ENCODE measurements at regions of chr1 and their contacts with region 1.

Region 1: GRCh38 chr1:241611063-241611462 is 29.1 kb downstream of the CHML start:
- DNase-seq: peak; percentile 57 to 90
- ATAC-seq: peak; percentile 41 to 63
- H3K4me3 ChIP-seq: no peak overlapping the region
- H3K27ac ChIP-seq: peak overlapping the region; percentile 89 to 90
- H3K4me1 ChIP-seq: peaks cover 95% of the 10 kb centered on the region
- CTCF ChIP-seq: peak; percentile 86
- EP300 ChIP-seq: no peak
- POLR2A ChIP-seq: no peak
- RAD21 ChIP-seq: peak; percentile 89

Region 2: DNA sequence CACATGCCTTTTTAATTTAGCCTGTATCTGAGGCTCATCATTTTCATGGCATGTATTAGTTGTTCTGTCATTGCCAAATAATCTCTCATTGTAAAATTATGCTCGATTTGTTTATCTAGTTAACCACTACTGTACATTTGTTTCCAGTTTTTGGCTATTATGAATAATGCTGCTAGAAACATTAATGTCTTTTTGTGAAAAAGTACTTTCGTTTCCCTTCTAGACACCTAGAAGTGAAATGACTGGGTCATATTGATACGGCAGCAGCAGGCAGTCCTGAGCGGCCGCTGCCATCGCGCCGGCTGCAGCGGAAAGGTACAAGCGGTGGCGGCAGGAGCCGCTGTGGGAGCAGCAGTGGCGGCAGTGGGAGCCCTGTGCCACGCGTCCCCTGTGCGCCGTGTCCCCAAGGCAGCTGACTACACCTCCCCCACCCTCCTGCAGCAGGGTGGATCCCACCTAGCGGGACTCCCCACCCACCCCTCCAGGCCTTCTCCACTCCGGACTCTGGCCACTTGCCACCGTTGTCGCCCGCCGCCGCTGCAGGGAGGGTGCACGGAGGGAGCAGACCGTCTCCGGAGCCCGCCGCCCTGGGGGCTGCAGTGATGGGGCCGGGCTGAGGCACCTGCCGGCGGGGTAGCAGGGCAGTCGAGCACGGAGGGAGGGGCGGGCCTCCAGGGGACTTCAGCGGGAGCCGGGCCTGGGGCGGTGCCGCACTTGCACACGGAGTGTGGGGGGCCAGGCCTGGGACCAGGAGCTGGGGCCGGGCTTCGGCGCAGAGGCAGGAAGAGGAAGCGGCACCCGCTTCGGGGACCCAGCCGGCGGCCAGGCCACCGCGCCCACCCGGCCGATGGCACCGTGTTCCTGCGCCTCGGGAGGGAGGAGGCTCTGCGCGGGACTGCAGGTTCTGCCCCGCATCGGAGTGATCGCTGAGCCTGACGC is 187.3 kb before region 1 on chr1:
- CTCF ChIA-PET with region 1: no interaction called
- POLR2A ChIA-PET with region 1: no interaction called
- DNase-seq: peak in 1 of 2 experiments; percentile 8
- ATAC-seq: peak; percentile 91 to 92
- H3K4me3 ChIP-seq: peak overlapping the region; percentile 47
- H3K27ac ChIP-seq: peak overlapping the region in 1 of 2 experiments; percentile 73; a peak in 3 of 6 replicates
- H3K4me1 ChIP-seq: no peaks in the 10 kb centered on the region
- CTCF ChIP-seq: no peak
- EP300 ChIP-seq: no peak
- POLR2A ChIP-seq: no peak
- RAD21 ChIP-seq: no peak

Region 3: GRCh38 chr1:241531195-241532161 is 79.6 kb before region 1 on chr1:
- CTCF ChIA-PET with region 1: interaction called, 14 read pairs
- POLR2A ChIA-PET with region 1: interaction called, 3 read pairs
- DNase-seq: peak; percentile 17 to 77
- ATAC-seq: peak; percentile 92 to 95
- H3K4me3 ChIP-seq: peak overlapping the region; percentile 50
- H3K27ac ChIP-seq: peak overlapping the region; percentile 71 to 76
- H3K4me1 ChIP-seq: 0 out of 3 replicates have a peak, but pooled peaks cover 10% of the 10 kb centered on the region
- CTCF ChIP-seq: peak; percentile 93
- EP300 ChIP-seq: no peak
- POLR2A ChIP-seq: no peak
- RAD21 ChIP-seq: peak; percentile 93

Region 4: DNA sequence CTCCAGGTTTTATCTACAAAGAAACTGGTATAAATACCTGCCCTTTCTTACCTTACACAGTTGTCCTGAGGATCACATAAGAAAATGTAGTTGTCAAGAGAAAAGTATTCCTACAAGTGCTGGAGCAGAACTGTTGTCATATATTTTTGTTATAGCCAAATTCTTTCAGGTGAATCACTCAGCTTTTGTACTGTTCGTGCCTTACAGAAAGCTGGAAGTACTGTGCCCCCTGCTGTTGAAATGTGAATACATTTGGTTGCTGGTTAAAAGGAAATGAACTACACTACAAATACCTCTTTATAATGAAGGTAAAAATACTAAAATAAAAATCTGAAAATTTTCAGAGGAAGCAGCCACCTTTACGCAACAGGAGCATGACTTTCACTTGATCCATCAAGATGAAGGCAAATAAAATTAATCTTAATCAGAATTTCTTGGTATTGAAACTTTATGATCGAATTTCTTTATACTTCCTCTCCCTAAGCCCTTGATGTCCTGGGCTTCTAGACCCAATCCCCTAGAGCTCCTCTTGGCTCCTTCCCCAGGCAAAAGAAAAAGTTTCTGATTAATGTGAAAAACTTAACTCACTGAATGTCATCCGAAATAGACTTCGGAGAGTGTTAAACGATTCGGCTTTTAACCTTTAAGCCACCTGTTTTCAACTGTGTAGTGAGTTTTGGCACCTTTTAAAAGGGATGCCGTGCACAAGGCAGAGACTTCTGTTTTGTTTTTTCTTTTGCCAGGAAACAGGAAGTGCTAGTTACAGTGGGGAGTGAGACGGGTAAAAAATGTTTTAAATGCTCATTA is 16.6 kb after region 1 on chr1:
- CTCF ChIA-PET with region 1: interaction called, 120 read pairs
- POLR2A ChIA-PET with region 1: interaction called, 4 read pairs
- DNase-seq: peak; percentile 60 to 79
- ATAC-seq: peak; percentile 66 to 81; a peak in 5 of 6 replicates
- H3K4me3 ChIP-seq: no peak overlapping the region
- H3K27ac ChIP-seq: peak overlapping the region; percentile 39 to 42; a peak in 4 of 6 replicates
- H3K4me1 ChIP-seq: peaks cover 46% of the 10 kb centered on the region
- CTCF ChIP-seq: peak; percentile 90
- EP300 ChIP-seq: no peak
- POLR2A ChIP-seq: no peak
- RAD21 ChIP-seq: peak; percentile 90 to 92

Region 5: GRCh38 chr1:241834733-241835377 is 223.8 kb after region 1 on chr1:
- CTCF ChIA-PET with region 1: interaction called, 32 read pairs
- POLR2A ChIA-PET with region 1: no interaction called
- DNase-seq: peak; percentile 27 to 68
- ATAC-seq: peak; percentile 64 to 73; a peak in 5 of 6 replicates
- H3K4me3 ChIP-seq: no peak overlapping the region
- H3K27ac ChIP-seq: no peak overlapping the region; a peak in 1 of 6 replicates
- H3K4me1 ChIP-seq: peaks cover 29% of the 10 kb centered on the region
- CTCF ChIP-seq: peak; percentile 87
- EP300 ChIP-seq: no peak
- POLR2A ChIP-seq: no peak
- RAD21 ChIP-seq: peak; percentile 90